Psoas muscle (tissue), 8 donors: ENCODE measurements at regions of chr17 and their contacts with region 1.

Region 1: GRCh38 chr17:2179615-2180295 is 123.8 kb downstream of the SMG6 start:
- DNase-seq: peak; percentile 78 to 83
- ATAC-seq: peak; percentile 64 to 86 (median 71)
- H3K4me3 ChIP-seq: no peak overlapping the region
- H3K27ac ChIP-seq: peak overlapping the region; percentile 84
- H3K4me1 ChIP-seq: peaks cover 75% of the 10 kb centered on the region
- H3K27me3 ChIP-seq: no peaks in the 10 kb centered on the region
- CTCF ChIP-seq: no peak

Region 2: GRCh38 chr17:2157675-2158395 is 21.9 kb before region 1 on chr17:
- intact Hi-C with region 1: no loop called
- DNase-seq: no peak
- ATAC-seq: peak in 2 of 4 donors; percentile 49 to 61
- H3K4me3 ChIP-seq: no peak overlapping the region
- H3K27ac ChIP-seq: no peak overlapping the region
- H3K4me1 ChIP-seq: peaks cover 7% of the 10 kb centered on the region
- H3K27me3 ChIP-seq: no peaks in the 10 kb centered on the region
- CTCF ChIP-seq: no peak

Region 3: DNA sequence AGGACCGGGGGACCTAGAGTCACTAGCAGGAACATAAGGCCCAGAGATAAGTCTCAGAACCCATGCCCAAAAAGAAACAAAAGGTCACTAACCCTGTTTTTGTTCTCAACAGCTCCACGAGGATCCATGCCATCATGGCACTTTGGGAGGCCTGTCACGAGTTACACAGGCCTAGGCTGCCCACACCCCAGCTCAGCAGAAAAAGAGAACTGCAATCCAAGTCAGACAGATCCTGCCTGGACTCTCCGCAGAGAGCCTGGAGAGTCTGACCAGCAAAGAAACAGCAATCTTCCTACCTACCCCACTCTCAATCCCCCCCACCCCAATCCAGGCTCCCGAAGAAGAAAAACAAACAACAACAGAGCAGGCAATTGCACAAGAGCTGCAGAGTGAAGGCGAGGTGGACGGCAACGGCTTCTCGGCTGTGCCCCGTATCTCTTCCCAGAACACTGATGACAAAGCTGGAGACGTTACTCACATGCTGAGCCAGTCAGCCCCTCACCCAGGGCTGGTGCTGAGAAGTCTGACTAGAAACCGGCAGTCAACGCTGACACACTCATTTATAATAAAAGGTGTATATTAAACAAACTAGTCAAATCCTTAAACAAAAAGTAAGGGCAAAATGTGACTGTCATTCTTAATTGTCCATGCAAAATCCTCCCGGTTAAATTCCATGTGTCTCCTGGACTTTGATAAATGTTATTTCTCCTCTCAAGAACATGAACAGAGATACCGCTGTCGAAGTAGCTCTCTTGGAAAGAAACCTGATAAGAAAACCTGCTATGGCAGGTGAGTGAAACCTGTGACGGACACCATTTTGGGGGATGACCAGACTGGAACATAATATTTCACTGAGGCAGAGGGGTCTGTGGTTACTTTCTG is 34.5 kb after region 1 on chr17:
- intact Hi-C with region 1: loop called (anchors 5 kb)
- DNase-seq: peak; percentile 65 to 72
- ATAC-seq: peak; percentile 73 to 85 (median 82)
- H3K4me3 ChIP-seq: peak overlapping the region; percentile 40
- H3K27ac ChIP-seq: peak overlapping the region; percentile 95
- H3K4me1 ChIP-seq: peaks cover 47% of the 10 kb centered on the region
- H3K27me3 ChIP-seq: no peaks in the 10 kb centered on the region
- CTCF ChIP-seq: no peak